Activated naive CD4-positive, alpha-beta T cell treated with anti-CD3 and anti-CD28 coated beads, Interleukin-2, amount 10 ng/mL, durations not matched to agents 7 days and 5 days (primary cell): ENCODE measurements at regions of chr12 and their contacts with region 1.

Region 1: GRCh38 chr12:93098077-93098476 is 169.0 kb upstream of the EEA1 start:
- DNase-seq: peak; percentile 79
- H3K4me3 Mint-ChIP-seq: no peak overlapping the region
- H3K27ac Mint-ChIP-seq: no peak overlapping the region
- H3K4me1 Mint-ChIP-seq: peaks cover 8% of the 10 kb centered on the region
- H3K27me3 Mint-ChIP-seq: no peaks in the 10 kb centered on the region

Region 2: DNA sequence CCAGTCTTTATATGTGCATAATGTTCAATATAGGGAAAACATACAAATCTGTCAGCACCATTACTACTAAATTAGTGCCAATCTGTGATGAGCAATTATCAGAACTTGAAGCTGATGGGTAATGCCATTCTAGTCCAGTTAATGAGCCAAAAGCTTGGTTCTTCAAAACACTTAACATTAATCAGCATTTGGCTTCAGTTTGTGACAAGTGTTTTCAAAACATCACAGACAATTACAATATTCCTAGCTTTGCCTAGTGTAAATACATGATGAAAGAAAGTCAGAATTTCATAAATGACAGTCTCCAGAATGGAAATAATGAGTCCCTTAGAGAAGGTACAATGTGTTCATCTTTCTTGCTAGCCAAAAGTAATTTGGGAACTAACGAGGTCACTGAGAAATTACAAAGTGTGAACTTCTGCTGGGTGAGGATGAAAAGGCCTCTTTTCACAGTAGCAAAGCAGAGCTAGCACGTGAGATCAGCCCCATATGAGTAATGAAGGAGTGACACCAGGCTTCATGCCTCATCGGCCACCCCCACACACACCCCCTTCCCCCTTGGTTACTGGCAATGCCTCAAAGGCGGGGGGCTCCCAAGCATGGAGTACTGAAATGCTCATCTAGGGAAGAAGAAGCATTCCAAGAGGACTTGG is 11.6 kb after region 1 on chr12:
- CTCF ChIA-PET with region 1: interaction called, 12 read pairs
- DNase-seq: no peak
- H3K4me3 Mint-ChIP-seq: no peak overlapping the region
- H3K27ac Mint-ChIP-seq: no peak overlapping the region
- H3K4me1 Mint-ChIP-seq: no peaks in the 10 kb centered on the region
- H3K27me3 Mint-ChIP-seq: no peaks in the 10 kb centered on the region

Region 3: GRCh38 chr12:93243689-93244513 is 145.8 kb after region 1 on chr12:
- CTCF ChIA-PET with region 1: interaction called, 14 read pairs
- DNase-seq: peak; percentile 37
- H3K4me3 Mint-ChIP-seq: peak overlapping the region; percentile 46
- H3K27ac Mint-ChIP-seq: peak overlapping the region; percentile 93
- H3K4me1 Mint-ChIP-seq: peaks cover 52% of the 10 kb centered on the region
- H3K27me3 Mint-ChIP-seq: no peaks in the 10 kb centered on the region

Region 4: DNA sequence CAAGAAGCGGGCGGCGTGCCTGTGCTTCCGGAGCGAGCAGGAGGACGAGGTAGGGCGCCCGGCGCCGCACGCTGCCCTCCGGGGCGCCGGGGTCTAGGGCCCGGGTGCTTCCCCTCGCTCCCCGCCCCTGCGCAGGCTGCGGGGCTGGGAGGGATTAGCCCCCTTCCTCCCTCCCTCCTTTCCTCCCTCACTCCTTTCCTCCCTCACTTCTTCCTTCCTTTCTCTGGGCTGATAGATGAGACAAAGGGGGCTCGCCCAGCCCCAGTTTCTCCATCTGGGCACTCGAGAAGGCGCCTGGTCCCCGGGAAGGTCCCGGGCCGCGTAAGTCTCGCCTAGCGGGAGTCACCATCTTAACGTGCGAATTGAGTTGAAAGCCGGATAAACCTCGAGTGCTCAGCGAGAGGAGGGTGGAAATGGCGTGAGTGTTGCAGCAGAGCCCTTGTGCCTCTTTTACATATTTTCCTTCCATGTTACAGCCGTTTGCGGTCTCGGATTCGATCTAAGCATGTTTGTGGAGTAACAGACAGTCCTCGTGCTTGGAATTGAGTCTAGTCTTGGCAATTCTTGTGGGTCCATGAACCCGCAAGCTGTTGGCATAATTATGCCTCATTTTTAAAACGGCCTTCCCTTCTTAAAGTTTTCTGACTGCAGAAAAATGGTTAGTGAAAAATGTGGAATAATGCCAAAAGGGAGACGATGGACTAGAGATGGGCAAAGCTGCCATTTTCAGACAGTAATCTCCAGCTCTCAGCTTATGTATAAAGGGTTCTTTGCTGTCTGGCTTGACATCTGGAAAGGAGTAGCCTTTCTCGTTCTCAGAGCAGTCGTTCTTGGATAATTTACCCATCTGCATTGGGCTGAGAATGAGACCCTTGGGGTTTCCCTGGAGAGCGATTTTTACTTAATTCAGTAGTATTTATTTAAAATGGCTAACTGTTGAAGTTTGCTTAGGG is 280.6 kb after region 1 on chr12:
- CTCF ChIA-PET with region 1: interaction called, 36 read pairs
- DNase-seq: peak; percentile 75
- H3K4me3 Mint-ChIP-seq: peak overlapping the region; percentile 100
- H3K27ac Mint-ChIP-seq: peak overlapping the region; percentile 100
- H3K4me1 Mint-ChIP-seq: peaks cover 45% of the 10 kb centered on the region
- H3K27me3 Mint-ChIP-seq: no peaks in the 10 kb centered on the region

Region 5: GRCh38 chr12:93397412-93397811 is 299.3 kb after region 1 on chr12:
- CTCF ChIA-PET with region 1: interaction called, 29 read pairs
- DNase-seq: no peak
- H3K4me3 Mint-ChIP-seq: no peak overlapping the region
- H3K27ac Mint-ChIP-seq: no peak overlapping the region
- H3K4me1 Mint-ChIP-seq: no peaks in the 10 kb centered on the region
- H3K27me3 Mint-ChIP-seq: no peaks in the 10 kb centered on the region

Region 6: GRCh38 chr12:93419388-93420034 is 321.4 kb after region 1 on chr12:
- CTCF ChIA-PET with region 1: interaction called, 21 read pairs
- DNase-seq: no peak
- H3K4me3 Mint-ChIP-seq: no peak overlapping the region
- H3K27ac Mint-ChIP-seq: no peak overlapping the region
- H3K4me1 Mint-ChIP-seq: peaks cover 69% of the 10 kb centered on the region
- H3K27me3 Mint-ChIP-seq: no peaks in the 10 kb centered on the region